ENCODE measurements at regions of chr1 and their contacts with region 1.

Region 1: GRCh38 chr1:11645670-11646265 is 8.5 kb downstream of the FBXO2 start:
- DNase-seq: peak; percentile 89
- ATAC-seq: peak; percentile 48
- H3K4me3 Mint-ChIP-seq: no peak overlapping the region
- H3K27ac Mint-ChIP-seq: no peak overlapping the region
- H3K4me1 Mint-ChIP-seq: peaks cover 13% of the 10 kb centered on the region
- H3K27me3 Mint-ChIP-seq: peaks cover 7% of the 10 kb centered on the region
- CTCF ChIP-seq: peak; percentile 84

Region 2: DNA sequence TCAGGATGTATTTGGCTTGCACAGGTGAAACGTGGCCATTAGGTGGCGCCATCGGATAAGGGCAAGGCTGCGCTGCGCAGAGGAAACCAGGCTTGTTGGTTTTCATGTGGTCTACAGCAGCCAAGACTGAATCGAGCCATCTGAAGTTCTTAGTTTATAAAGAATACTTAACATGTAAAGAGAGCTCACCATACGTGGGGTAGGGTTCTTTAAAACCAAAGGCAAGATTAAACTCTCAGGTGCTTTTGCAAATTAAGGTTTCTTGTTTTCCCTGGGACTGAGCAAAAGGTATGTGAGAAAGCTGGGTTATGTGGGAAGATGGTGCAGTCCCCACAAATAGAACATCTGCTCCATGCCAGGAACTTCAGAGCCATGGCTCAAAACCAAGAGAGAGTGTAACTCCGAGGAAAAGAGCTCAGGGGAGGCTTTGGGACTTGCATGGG is 608.0 kb before region 1 on chr1:
- CTCF ChIA-PET with region 1: interaction called, 14 read pairs
- POLR2A ChIA-PET with region 1: no interaction called
- DNase-seq: peak; percentile 91
- ATAC-seq: peak; percentile 98
- H3K4me3 Mint-ChIP-seq: no peak overlapping the region
- H3K27ac Mint-ChIP-seq: no peak overlapping the region
- H3K4me1 Mint-ChIP-seq: peaks cover 2% of the 10 kb centered on the region; the same call in 1 of the 2 replicates
- H3K27me3 Mint-ChIP-seq: no peaks in the 10 kb centered on the region
- CTCF ChIP-seq: peak; percentile 93

Region 3: GRCh38 chr1:11320153-11320936 is 325.4 kb before region 1 on chr1:
- CTCF ChIA-PET with region 1: interaction called, 12 read pairs
- POLR2A ChIA-PET with region 1: interaction called, 3 read pairs
- DNase-seq: peak; percentile 91
- ATAC-seq: peak; percentile 90
- H3K4me3 Mint-ChIP-seq: no peak overlapping the region
- H3K27ac Mint-ChIP-seq: no peak overlapping the region
- H3K4me1 Mint-ChIP-seq: peaks cover 16% of the 10 kb centered on the region
- H3K27me3 Mint-ChIP-seq: no peaks in the 10 kb centered on the region
- CTCF ChIP-seq: peak; percentile 81

Region 4: DNA sequence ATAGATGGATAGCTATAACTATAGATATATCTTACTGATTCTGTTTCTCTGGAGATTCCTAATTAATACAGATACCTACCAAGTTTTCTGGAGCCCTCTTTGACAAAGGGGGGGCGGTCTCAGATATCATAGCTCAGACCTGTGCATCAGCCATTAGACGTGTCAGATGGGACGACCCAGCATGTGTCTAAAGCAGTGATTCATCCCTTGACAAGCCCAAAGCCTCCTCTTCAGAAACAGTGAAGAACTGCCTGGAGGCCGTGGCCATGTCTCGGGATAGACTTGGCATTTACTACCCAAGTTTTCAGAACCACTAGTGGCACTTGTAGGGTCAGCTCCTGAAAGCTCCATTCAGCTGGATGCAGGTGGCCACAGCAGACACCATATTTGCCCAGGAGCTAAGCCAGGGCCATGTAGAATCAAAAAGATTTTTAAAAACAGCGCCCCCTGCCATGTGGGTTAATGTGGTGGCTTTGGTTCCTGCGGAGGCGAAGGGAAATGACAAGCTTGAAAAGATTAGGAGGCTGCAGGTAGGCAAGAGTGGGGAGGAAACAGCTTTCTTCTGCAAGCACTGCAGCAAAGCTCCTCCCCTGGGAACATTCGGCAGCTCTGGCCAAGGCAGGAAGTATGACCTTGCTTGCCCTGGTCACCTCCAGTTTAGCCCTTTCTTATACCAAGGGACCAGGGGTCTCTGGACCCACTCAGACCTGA is 73.7 kb before region 1 on chr1:
- CTCF ChIA-PET with region 1: interaction called, 18 read pairs
- POLR2A ChIA-PET with region 1: no interaction called
- DNase-seq: peak; percentile 81
- ATAC-seq: peak; percentile 94
- H3K4me3 Mint-ChIP-seq: no peak overlapping the region
- H3K27ac Mint-ChIP-seq: no peak overlapping the region
- H3K4me1 Mint-ChIP-seq: peaks cover 9% of the 10 kb centered on the region
- H3K27me3 Mint-ChIP-seq: no peaks in the 10 kb centered on the region
- CTCF ChIP-seq: 0 out of 2 replicates have a peak, but pooled peaks have one; percentile 31

Region 5: DNA sequence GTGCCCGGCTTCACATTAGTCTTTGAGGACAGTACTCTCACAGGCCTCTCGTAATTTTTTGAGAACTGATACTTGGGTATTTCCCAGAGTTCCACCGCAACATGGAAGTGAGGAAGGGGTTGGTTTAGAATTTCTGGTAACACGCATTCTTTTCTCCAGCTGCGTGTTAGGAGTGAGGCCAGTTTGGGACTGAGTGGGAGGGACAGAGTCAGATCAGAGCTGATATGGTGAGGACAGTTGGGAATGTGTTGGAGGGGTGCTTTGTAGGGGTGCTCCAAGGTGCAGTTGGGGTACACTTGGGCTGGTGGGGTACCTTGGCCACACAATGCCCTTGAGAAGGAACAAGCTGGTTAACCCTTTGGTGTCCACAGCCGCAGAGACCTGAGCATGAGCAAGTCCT is 25.0 kb after region 1 on chr1:
- CTCF ChIA-PET with region 1: interaction called, 23 read pairs
- POLR2A ChIA-PET with region 1: no interaction called
- DNase-seq: no peak
- ATAC-seq: no peak
- H3K4me3 Mint-ChIP-seq: no peak overlapping the region
- H3K27ac Mint-ChIP-seq: no peak overlapping the region
- H3K4me1 Mint-ChIP-seq: no peaks in the 10 kb centered on the region
- H3K27me3 Mint-ChIP-seq: no peaks in the 10 kb centered on the region; the same call in 1 of the 2 replicates
- CTCF ChIP-seq: no peak

Region 6: DNA sequence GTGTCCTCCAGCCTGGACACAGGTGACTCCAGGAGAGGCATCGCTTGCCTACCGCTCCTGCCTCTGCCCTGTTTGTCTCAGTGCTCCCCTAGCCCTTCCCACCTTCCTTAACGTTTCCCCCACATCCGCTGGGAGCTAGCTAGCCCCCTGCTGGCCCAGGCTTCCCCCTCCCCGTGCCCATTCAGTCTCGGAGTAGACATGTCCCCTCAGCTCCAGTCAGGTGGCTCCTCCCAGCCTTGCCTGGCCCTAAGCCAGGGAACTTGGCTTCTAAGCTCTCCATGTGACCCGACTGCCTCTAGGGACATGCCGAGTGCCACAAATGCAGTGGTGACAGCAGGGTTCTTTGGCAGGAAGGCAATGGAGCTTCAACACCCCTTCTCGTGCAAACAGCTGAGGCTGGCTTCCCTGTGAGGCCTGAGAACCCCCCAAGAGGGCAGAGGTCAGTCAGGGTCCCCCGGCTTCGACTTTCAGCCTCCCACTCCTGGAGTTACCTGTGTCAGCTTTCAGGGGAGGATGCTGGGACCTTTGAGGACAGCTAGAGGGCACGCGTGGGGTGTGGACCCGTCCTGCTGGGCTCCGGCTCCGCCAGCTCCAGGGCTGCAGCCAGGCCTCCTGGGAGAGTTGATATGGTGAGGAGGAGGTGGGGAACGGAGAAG is 62.0 kb after region 1 on chr1:
- CTCF ChIA-PET with region 1: interaction called, 14 read pairs
- POLR2A ChIA-PET with region 1: no interaction called
- DNase-seq: no peak
- ATAC-seq: peak; percentile 19
- H3K4me3 Mint-ChIP-seq: no peak overlapping the region
- H3K27ac Mint-ChIP-seq: peak overlapping the region; percentile 25; the same call in 1 of the 2 replicates
- H3K4me1 Mint-ChIP-seq: peaks cover 48% of the 10 kb centered on the region
- H3K27me3 Mint-ChIP-seq: no peaks in the 10 kb centered on the region
- CTCF ChIP-seq: no peak

Region 7: GRCh38 chr1:11735854-11736745 is 90.3 kb after region 1 on chr1 and contains the start of gene AGTRAP:
- CTCF ChIA-PET with region 1: interaction called, 13 read pairs
- POLR2A ChIA-PET with region 1: no interaction called
- DNase-seq: peak; percentile 98
- ATAC-seq: peak; percentile 73
- H3K4me3 Mint-ChIP-seq: peak within 1 kb of the TSS; percentile 94
- H3K27ac Mint-ChIP-seq: peak within 1 kb of the TSS; percentile 93
- H3K4me1 Mint-ChIP-seq: peaks cover 47% of the 10 kb centered on the region
- H3K27me3 Mint-ChIP-seq: no peaks in the 10 kb centered on the region; the same call in 1 of the 2 replicates
- CTCF ChIP-seq: no peak
- total RNA-seq, gene AGTRAP: 81.6 to 102 TPM (median 101 TPM) in 3 replicates

Measured in WTC11 (cell line).